Right cardiac atrium (tissue), 5 donors: ENCODE measurements at regions of chr17 and their contacts with region 1.

Region 1: GRCh38 chr17:39699818-39700147 is at the start of gene ERBB2:
- DNase-seq: peak; percentile 77 to 90 (median 89)
- ATAC-seq: peak; percentile 89 to 90
- H3K4me3 ChIP-seq: peak within 1 kb of the TSS; percentile 91
- H3K27ac ChIP-seq: peak within 1 kb of the TSS; percentile 73
- H3K4me1 ChIP-seq: peaks cover 5% of the 10 kb centered on the region
- H3K27me3 ChIP-seq: no peaks in the 10 kb centered on the region
- total RNA-seq, gene ERBB2: 99.2 to 178 (median 114) TPM

Region 2: GRCh38 chr17:39553341-39553945 is 146.3 kb before region 1 on chr17:
- intact Hi-C with region 1: no loop called
- DNase-seq: no peak
- ATAC-seq: no peak
- H3K4me3 ChIP-seq: no peak overlapping the region
- H3K27ac ChIP-seq: no peak overlapping the region
- H3K4me1 ChIP-seq: peaks cover 2% of the 10 kb centered on the region
- H3K27me3 ChIP-seq: no peaks in the 10 kb centered on the region

Region 3: GRCh38 chr17:39643271-39643670 is 56.5 kb before region 1 on chr17:
- intact Hi-C with region 1: loop called in 1 of 4 experiments (anchors 10 kb)
- DNase-seq: no peak
- ATAC-seq: peak; percentile 15 to 32
- H3K4me3 ChIP-seq: no peak overlapping the region
- H3K27ac ChIP-seq: no peak overlapping the region
- H3K4me1 ChIP-seq: peaks cover 20% of the 10 kb centered on the region
- H3K27me3 ChIP-seq: no peaks in the 10 kb centered on the region

Region 4: DNA sequence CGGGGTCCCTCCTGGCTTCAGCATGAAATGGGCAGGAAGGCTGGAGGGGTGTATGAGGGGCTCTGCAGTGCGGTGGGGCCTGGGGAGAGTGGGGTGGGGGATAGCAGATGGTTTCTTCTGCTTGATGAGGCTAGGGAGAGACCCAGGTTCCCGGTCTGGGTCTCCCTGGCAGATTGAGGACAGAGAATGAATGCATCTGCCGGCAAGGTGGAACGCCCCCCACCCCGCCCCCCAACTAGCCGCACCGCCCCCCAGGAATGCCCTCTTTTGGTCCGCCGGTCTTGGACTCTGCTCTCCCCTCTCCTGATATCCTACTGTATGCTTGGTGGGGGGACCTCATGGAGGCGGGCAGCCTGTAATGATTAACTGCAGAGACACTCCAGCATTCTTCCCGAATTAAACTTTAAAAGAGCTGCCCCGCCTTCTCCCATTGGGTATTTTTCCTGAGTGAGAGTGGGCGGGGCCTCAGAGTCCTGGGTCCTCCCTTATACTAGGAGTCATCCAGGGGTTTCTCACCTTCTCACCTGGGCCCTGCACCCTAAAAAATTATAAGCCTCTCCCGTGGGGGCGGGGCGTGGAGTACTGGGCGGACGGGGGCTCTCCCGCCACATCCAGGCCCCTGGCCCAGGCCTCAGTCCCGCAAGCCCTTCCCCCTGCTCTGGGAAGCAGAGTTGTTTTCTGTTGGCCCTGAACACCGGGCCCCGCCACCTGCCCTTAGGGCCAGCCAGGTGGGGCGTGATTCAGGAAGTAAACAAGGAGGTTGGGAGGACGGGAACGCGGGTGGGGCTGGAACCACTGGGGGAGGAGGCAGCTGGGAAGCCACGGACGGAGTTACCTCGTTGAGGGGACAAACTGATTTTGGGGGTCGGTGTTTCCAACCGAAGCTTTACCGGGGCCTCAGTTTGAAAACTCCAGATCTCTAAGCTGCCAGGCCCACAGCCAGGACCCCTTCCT is 39.4 kb after region 1 on chr17:
- intact Hi-C with region 1: no loop called
- DNase-seq: peak in 2 of 3 donors; percentile 63 to 66
- ATAC-seq: peak; percentile 27 to 33
- H3K4me3 ChIP-seq: peak overlapping the region; percentile 30
- H3K27ac ChIP-seq: no peak overlapping the region
- H3K4me1 ChIP-seq: no peaks in the 10 kb centered on the region
- H3K27me3 ChIP-seq: no peaks in the 10 kb centered on the region